Transverse colon (tissue), 4 donors: ENCODE measurements at regions of chr16 and their contacts with region 1.

Region 1: GRCh38 chr16:51181503-51181811 is 30.4 kb upstream of the SALL1 start:
- DNase-seq: no peak
- H3K4me3 ChIP-seq: no peak overlapping the region
- H3K27ac ChIP-seq: no peak overlapping the region
- H3K4me1 ChIP-seq: no peaks in the 10 kb centered on the region
- H3K27me3 ChIP-seq: no peaks in the 10 kb centered on the region
- CTCF ChIP-seq: no peak
- EP300 ChIP-seq: no peak
- POLR2A ChIP-seq: no peak

Region 2: GRCh38 chr16:51210087-51210486 is 28.6 kb after region 1 on chr16:
- in situ Hi-C with region 1: no loop called
- intact Hi-C with region 1: loop called (anchors 1 kb)
- DNase-seq: no peak
- H3K4me3 ChIP-seq: no peak overlapping the region
- H3K27ac ChIP-seq: no peak overlapping the region
- H3K4me1 ChIP-seq: no peaks in the 10 kb centered on the region
- H3K27me3 ChIP-seq: no peaks in the 10 kb centered on the region
- CTCF ChIP-seq: no peak
- EP300 ChIP-seq: no peak
- POLR2A ChIP-seq: no peak